ENCODE measurements at regions of chr12 and their contacts with region 1.

Region 1: GRCh38 chr12:54299515-54300261 is 1.1 kb downstream of the NFE2 start:
- DNase-seq: no peak
- ATAC-seq: no peak

Region 2: DNA sequence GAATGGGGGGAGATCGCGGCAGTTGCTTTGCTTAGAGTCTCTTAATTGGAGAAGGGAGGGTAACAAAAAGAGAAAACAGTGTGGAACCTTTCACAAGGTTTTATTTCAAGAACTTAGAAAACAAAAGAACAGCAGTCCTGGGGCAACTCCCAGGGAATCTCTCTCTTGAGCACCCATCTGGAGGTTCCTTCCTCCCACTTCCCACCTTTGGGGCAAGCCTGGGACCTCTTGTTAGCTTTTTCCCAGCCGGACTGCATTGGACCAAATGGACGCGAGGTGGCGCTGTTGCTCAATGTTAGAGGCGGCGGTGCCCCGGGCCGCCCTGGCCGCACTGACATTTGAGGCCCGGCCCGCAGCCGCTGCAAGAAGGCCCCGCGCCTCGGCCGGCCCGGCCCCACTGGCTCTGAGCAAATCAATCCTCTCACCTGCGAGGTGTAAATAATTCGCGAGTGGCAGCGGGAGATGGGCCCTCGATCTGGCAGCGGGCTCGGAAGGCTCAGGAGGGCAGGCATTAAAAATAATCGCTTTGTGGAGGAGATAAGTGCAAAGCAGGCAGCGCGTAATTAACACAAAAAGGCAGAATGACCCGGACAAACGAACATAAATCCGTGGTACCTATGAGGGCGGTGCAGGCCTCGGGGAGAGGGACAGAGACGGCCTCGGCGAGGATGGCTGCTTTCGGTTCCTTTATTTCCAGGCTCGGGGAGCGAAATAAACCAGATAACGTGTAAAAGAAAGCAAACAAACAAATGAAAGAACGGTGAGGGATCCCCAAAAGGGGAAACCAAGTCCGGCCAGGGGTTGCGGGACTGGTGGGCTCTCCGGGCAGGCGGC is 293.6 kb before region 1 on chr12:
- intact Hi-C with region 1: no loop called
- DNase-seq: peak; percentile 60 to 90
- ATAC-seq: peak; percentile 87

Region 3: DNA sequence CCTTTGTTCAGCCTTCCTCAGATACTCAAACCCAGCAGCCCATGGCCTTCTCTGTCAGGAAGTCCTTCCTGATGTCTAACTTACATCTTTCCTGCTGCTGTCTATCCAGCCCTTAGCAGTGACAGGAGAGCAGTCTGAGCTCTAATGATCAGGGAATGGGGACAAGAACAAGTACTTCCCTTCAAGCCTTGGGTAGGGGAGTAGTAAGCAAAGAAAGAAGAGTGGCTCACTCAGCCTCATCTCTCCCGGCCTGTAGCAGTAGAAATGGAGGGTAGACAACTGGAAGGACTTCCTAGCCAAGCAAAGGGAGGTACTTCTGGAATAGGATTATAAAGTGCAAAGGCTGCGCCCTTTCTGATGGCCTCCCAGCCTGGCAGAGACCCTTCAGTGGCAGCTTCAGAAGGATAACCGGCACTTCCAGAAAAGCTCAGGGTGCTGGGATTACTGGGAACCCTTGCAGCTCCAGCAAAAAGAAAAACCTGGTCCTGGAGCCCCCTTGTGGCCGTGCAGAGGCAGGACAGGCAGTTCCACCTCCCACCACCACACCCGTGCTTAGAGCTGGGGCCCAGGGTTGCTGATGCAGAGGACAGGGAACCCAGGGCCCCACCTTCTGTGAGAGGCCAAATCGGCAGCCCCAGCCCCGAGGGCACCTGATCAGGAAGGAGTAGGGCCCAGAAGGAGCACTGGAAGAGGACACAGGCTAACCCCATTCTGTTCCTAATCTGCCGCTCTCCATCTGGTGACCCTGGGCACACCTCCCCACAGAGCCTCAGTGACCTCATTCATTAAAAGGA is 98.5 kb before region 1 on chr12:
- intact Hi-C with region 1: no loop called
- DNase-seq: peak; percentile 35 to 45
- ATAC-seq: peak; percentile 94

Region 4: DNA sequence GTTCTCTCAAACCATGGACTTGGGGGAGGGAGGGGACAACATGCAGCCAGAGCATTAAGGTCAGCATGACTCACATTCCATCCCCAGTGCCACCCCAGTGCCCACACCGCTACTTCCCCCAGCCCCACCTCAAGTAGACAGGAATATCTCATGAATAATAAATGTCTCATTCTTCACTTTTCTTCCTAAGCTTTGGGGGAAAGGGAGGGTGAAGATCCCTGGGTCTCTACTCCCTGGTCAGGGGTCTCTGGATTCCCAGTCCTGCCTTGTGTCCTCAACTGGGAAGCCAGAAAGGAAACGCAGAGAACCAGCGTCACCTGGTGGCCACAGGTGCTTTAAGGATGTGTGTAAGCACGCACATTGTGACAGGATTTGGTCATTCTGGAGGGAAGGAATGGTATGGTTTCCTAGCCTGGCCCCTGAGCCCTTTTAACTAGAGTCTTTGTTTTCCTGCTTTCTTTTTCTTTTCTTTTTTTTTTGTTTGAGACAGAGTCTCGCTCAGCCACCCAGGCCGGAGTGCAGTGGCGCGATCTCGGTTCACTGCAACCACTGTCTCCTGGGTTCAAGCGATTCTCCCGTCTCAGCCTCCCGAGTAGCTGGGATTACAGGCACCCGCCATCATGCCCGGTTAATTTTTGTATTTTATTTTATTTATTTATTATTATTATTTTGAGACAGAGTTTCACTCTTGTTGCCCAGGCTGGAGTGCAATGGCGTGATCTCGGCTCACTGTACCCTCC is 61.2 kb after region 1 on chr12:
- intact Hi-C with region 1: loop called in 1 of 2 experiments (anchors 5 kb)
- DNase-seq: peak in 1 of 2 donors; percentile 91
- ATAC-seq: peak; percentile 36

Region 5: GRCh38 chr12:54463034-54463433 is 163.3 kb after region 1 on chr12:
- intact Hi-C with region 1: no loop called
- DNase-seq: no peak
- ATAC-seq: no peak